ENCODE measurements at regions of chr1 and their contacts with region 1.

Region 1: DNA sequence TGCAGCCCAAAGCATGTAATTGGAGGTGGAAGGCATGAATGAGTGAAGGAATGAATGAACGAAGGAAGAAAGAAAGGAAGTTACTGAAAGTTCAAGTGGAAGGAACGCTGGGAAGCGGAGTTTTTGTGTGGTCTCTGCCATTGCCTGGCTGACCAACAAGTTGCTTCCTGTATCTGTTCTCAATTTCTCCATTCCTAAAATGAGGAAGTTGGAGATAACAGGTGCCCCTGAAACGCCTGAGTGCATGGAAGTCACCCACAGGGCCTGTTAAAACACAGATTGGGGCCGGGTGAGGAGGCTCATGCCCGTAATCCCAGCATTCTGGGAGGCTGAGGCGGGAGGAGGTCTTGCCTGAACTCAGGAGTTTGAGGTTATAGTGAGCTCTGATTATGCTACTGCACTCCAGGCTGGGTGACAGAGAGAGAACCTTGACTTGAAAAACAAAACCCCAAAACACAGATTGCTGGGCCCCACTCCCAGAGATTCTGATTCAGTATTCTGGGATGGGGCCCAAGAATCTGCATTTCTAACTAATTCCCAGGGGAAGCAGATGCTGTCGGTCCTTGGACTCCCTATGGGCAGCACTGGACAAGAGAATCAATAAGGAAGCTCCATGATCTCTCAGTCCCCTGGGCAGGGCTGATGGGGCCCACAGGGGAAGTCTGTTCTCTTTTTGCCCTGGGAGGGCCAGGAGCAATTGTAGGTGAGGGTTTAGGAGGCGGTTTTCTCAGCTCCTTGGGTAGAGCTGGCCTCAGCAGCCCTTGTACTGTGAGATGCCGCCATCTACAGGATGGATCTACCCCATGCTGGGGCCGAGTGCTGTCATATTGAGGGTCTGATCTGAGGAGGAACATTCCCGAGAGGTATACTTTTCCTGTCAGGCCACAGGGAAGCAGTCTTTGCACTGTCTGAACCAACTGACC is 3.3 kb upstream of the CNR2 start:
- DNase-seq: peak; percentile 50
- ATAC-seq: peak; percentile 72
- H3K4me3 Mint-ChIP-seq: peak overlapping the region; percentile 61
- H3K27ac Mint-ChIP-seq: peak overlapping the region; percentile 99
- H3K4me1 Mint-ChIP-seq: peaks cover 69% of the 10 kb centered on the region
- H3K27me3 Mint-ChIP-seq: no peaks in the 10 kb centered on the region
- CTCF ChIP-seq: peak; percentile 37

Region 2: GRCh38 chr1:23772049-23772853 is 144.2 kb before region 1 on chr1:
- CTCF ChIA-PET with region 1: interaction called, 91 read pairs
- POLR2A ChIA-PET with region 1: interaction called, 18 read pairs
- intact Hi-C with region 1: loop called (anchors 1 kb)
- DNase-seq: peak; percentile 76
- ATAC-seq: peak; percentile 100
- H3K4me3 Mint-ChIP-seq: no peak overlapping the region
- H3K27ac Mint-ChIP-seq: no peak overlapping the region
- H3K4me1 Mint-ChIP-seq: peaks cover 10% of the 10 kb centered on the region
- H3K27me3 Mint-ChIP-seq: no peaks in the 10 kb centered on the region
- CTCF ChIP-seq: peak; percentile 68

Region 3: GRCh38 chr1:23809751-23810171 is 106.7 kb before region 1 on chr1:
- CTCF ChIA-PET with region 1: interaction called, 188 read pairs
- POLR2A ChIA-PET with region 1: interaction called, 34 read pairs
- intact Hi-C with region 1: loop called (anchors 1 kb)
- DNase-seq: peak; percentile 69
- ATAC-seq: peak; percentile 89
- H3K4me3 Mint-ChIP-seq: no peak overlapping the region
- H3K27ac Mint-ChIP-seq: peak overlapping the region; percentile 74
- H3K4me1 Mint-ChIP-seq: peaks cover 25% of the 10 kb centered on the region
- H3K27me3 Mint-ChIP-seq: no peaks in the 10 kb centered on the region
- CTCF ChIP-seq: no peak

Region 4: GRCh38 chr1:23838401-23838866 is 78.0 kb before region 1 on chr1:
- CTCF ChIA-PET with region 1: interaction called, 3 read pairs
- POLR2A ChIA-PET with region 1: interaction called, 5 read pairs
- intact Hi-C with region 1: loop called (anchors 1 kb)
- DNase-seq: peak; percentile 70
- ATAC-seq: peak; percentile 100
- H3K4me3 Mint-ChIP-seq: peak overlapping the region; percentile 76
- H3K27ac Mint-ChIP-seq: peak overlapping the region; percentile 63
- H3K4me1 Mint-ChIP-seq: peaks cover 10% of the 10 kb centered on the region
- H3K27me3 Mint-ChIP-seq: no peaks in the 10 kb centered on the region
- CTCF ChIP-seq: no peak

Region 5: GRCh38 chr1:23897083-23897482 is 19.4 kb before region 1 on chr1:
- CTCF ChIA-PET with region 1: interaction called, 16 read pairs
- POLR2A ChIA-PET with region 1: interaction called, 208 read pairs
- intact Hi-C with region 1: loop called (anchors 1 kb)
- DNase-seq: no peak
- ATAC-seq: no peak
- H3K4me3 Mint-ChIP-seq: peak overlapping the region; percentile 42
- H3K27ac Mint-ChIP-seq: peak overlapping the region; percentile 83
- H3K4me1 Mint-ChIP-seq: peaks cover 87% of the 10 kb centered on the region
- H3K27me3 Mint-ChIP-seq: no peaks in the 10 kb centered on the region
- CTCF ChIP-seq: no peak

Region 6: DNA sequence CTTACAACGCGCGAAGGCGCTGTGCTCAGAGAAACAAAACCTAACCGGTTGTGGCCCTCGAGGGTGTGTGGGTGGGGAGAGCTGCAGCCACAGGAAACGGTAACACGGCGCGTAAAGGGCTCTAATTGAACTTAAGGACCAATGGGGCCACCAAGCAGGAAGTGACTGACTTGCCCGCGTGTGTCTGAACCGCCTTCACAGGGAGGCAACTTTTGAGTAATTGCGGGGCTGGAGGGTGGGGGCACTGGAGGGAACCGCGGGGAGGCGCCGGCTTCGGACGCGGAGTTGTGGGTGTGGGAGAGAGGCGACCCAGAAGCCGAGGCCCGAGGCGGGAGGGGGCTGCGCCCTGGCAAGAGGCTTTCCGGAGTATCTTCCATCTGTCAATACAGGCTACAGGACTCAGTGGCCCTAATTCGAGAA is 42.6 kb after region 1 on chr1:
- CTCF ChIA-PET with region 1: interaction called, 9 read pairs
- POLR2A ChIA-PET with region 1: interaction called, 43 read pairs
- intact Hi-C with region 1: loop called (anchors 2 kb)
- DNase-seq: peak; percentile 78
- ATAC-seq: peak; percentile 77
- H3K4me3 Mint-ChIP-seq: peak overlapping the region; percentile 99
- H3K27ac Mint-ChIP-seq: peak overlapping the region; percentile 100
- H3K4me1 Mint-ChIP-seq: peaks cover 82% of the 10 kb centered on the region
- H3K27me3 Mint-ChIP-seq: no peaks in the 10 kb centered on the region
- CTCF ChIP-seq: no peak

Region 7: GRCh38 chr1:24085546-24085945 is 169.1 kb after region 1 on chr1:
- CTCF ChIA-PET with region 1: no interaction called
- POLR2A ChIA-PET with region 1: no interaction called
- intact Hi-C with region 1: no loop called
- DNase-seq: no peak
- ATAC-seq: no peak
- H3K4me3 Mint-ChIP-seq: no peak overlapping the region
- H3K27ac Mint-ChIP-seq: no peak overlapping the region
- H3K4me1 Mint-ChIP-seq: no peaks in the 10 kb centered on the region
- H3K27me3 Mint-ChIP-seq: peaks cover 3% of the 10 kb centered on the region
- CTCF ChIP-seq: no peak

Region 8: GRCh38 chr1:24341260-24341659 is 424.8 kb after region 1 on chr1:
- CTCF ChIA-PET with region 1: no interaction called
- POLR2A ChIA-PET with region 1: no interaction called
- intact Hi-C with region 1: no loop called
- DNase-seq: no peak
- ATAC-seq: no peak
- H3K4me3 Mint-ChIP-seq: no peak overlapping the region
- H3K27ac Mint-ChIP-seq: no peak overlapping the region
- H3K4me1 Mint-ChIP-seq: no peaks in the 10 kb centered on the region
- H3K27me3 Mint-ChIP-seq: peaks cover 5% of the 10 kb centered on the region
- CTCF ChIP-seq: no peak

Measured in activated B cell treated with CpG ODN at 0.5 μM for 24 hours (primary cell).